Left ventricle myocardium inferior (tissue), 1 donor: ENCODE measurements at regions of chr3 and their contacts with region 1.

Region 1: GRCh38 chr3:11651900-11652299 is 8.2 kb upstream of the VGLL4 start:
- DNase-seq: no peak
- H3K4me3 ChIP-seq: no peak overlapping the region
- H3K27ac ChIP-seq: no peak overlapping the region
- H3K4me1 ChIP-seq: peaks cover 10% of the 10 kb centered on the region
- H3K27me3 ChIP-seq: no peaks in the 10 kb centered on the region
- CTCF ChIP-seq: peak; percentile 73

Region 2: DNA sequence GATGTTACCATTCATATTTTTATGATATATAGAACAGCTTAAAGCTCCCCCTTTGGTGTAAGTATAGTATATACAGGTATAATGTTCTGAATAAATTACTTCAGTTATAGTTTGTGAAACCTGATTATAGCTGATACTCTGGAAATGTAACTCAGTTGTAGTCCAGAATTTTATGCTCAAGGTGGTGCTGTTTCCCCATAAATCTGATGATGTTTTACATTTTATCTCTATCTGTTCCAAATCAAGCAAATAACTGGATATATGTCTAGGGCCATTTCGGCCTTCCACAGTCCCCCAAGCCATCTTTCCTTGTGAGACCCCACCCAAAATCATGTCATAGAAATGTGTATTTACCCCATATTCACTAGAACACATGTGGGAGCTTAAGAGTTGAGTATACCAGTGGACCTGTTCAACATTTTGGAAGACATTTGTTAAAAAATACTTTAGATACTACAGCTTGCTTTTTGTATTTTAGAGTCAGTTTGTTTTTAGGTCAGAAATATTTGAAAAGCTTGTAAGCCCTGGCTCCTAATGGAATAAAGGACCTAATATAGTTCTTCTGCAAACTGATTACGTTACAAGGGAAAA is 272.6 kb before region 1 on chr3:
- intact Hi-C with region 1: loop called (anchors 5 kb)
- DNase-seq: no peak
- H3K4me3 ChIP-seq: no peak overlapping the region
- H3K27ac ChIP-seq: no peak overlapping the region
- H3K4me1 ChIP-seq: peaks cover 8% of the 10 kb centered on the region
- H3K27me3 ChIP-seq: no peaks in the 10 kb centered on the region
- CTCF ChIP-seq: peak; percentile 79

Region 3: GRCh38 chr3:11803977-11804892 is 152.3 kb after region 1 on chr3:
- intact Hi-C with region 1: loop called (anchors 10 kb)
- DNase-seq: no peak
- H3K4me3 ChIP-seq: no peak overlapping the region
- H3K27ac ChIP-seq: no peak overlapping the region
- H3K4me1 ChIP-seq: no peaks in the 10 kb centered on the region
- H3K27me3 ChIP-seq: no peaks in the 10 kb centered on the region
- CTCF ChIP-seq: peak; percentile 84